ENCODE measurements at regions of chr12 and their contacts with region 1.

Region 1: GRCh38 chr12:48105862-48106680 is at the start of gene SENP1:
- DNase-seq: peak; percentile 85 to 94 (median 93)
- ATAC-seq: peak; percentile 92
- H3K4me3 ChIP-seq: peak within 1 kb of the TSS; percentile 86
- H3K27ac ChIP-seq: peak within 1 kb of the TSS; percentile 96
- H3K4me1 ChIP-seq: peaks cover 3 to 7% of the 10 kb centered on the region in 2 experiments; a peak in 3 of 5 replicates
- H3K27me3 ChIP-seq: no peaks in the 10 kb centered on the region
- CTCF ChIP-seq: 0 out of 6 replicates have a peak, but pooled peaks of 1 of the 3 experiments have one; percentile 21
- EP300 ChIP-seq: peak; percentile 5; the same call in 1 of the 2 replicates
- POLR2A ChIP-seq: peak; percentile 82
- RAD21 ChIP-seq: 0 out of 4 replicates have a peak, but pooled peaks of 1 of the 2 experiments have one; percentile 13
- polyA plus RNA-seq, gene SENP1: 15.5 to 19.3 TPM

Region 2: GRCh38 chr12:48084066-48084465 is 22.0 kb before region 1 on chr12:
- CTCF ChIA-PET with region 1: no interaction called
- POLR2A ChIA-PET with region 1: interaction called, 10 read pairs
- in situ Hi-C with region 1: no loop called
- intact Hi-C with region 1: no loop called
- DNase-seq: peak in 1 of 4 experiments; percentile 9
- ATAC-seq: no peak; the same call in 2 of the 3 replicates
- H3K4me3 ChIP-seq: no peak overlapping the region
- H3K27ac ChIP-seq: no peak overlapping the region
- H3K4me1 ChIP-seq: no peaks in the 10 kb centered on the region
- H3K27me3 ChIP-seq: no peaks in the 10 kb centered on the region
- CTCF ChIP-seq: peak in 1 of 3 experiments; percentile 45; a peak in 3 of 6 replicates
- EP300 ChIP-seq: no peak
- POLR2A ChIP-seq: no peak
- RAD21 ChIP-seq: peak in 1 of 2 experiments; percentile 52; a peak in 3 of 4 replicates

Region 3: GRCh38 chr12:48119078-48119833 is 13.2 kb after region 1 on chr12 and contains the start of gene PFKM:
- CTCF ChIA-PET with region 1: no interaction called
- POLR2A ChIA-PET with region 1: interaction called, 24 read pairs
- in situ Hi-C with region 1: no loop called
- intact Hi-C with region 1: no loop called
- DNase-seq: peak; percentile 94 to 95 (median 95)
- ATAC-seq: peak; percentile 99
- H3K4me3 ChIP-seq: peak within 1 kb of the TSS; percentile 57
- H3K27ac ChIP-seq: peak within 1 kb of the TSS; percentile 42; the same call in 1 of the 3 replicates
- H3K4me1 ChIP-seq: peaks cover 7 to 26% of the 10 kb centered on the region in 2 experiments; a peak in 4 of 5 replicates
- H3K27me3 ChIP-seq: no peaks in the 10 kb centered on the region
- CTCF ChIP-seq: no peak
- EP300 ChIP-seq: 0 out of 2 replicates have a peak, but pooled peaks have one; percentile 24
- POLR2A ChIP-seq: peak; percentile 52
- RAD21 ChIP-seq: no peak
- polyA plus RNA-seq, gene PFKM: 16.5 to 36.8 TPM

Region 4: DNA sequence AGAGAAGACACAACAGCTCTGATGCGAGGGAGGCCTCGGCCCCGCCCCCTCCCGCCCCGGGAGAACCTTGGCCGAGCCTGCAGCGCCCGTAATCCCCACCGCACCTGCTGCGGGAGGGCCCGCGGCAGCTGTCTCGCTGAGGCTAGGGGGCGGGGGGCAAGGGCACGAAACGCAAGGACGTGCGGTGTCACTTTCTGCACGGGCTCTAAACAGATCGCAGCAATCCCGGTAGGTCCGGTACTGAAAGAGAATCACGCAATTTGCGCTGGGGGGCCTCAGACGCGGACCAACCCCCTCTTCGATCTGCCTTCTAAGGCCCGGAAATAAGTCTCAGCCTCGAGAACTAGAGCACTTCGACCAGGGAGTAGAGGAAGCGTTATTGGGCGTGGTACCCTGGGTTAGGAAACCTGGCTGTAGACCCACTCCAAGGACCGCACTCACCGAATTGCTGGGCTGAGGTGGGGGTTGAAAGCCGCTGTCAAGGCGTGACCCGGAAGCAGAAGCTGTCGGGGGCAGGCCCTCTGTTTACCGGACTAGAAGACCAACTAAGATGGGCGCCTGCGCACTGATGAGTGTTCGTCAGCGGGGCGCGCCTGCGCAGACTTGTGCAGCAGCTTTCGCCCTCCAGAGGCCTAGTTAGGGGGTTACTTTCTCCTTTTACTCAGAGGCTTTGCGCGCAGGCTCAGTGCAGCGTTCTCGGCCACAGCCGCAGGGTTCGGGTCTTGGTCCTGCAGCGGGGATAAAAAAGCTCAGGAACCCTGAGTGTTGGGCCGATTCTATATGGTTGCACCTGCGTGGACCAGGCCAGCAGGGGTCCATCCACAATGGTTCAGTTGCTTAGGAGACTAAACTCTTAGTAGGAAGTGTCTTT is 51.2 kb after region 1 on chr12 and contains the start of gene ASB8:
- CTCF ChIA-PET with region 1: no interaction called
- POLR2A ChIA-PET with region 1: interaction called, 5 read pairs
- in situ Hi-C with region 1: no loop called
- intact Hi-C with region 1: loop called (anchors 1 kb)
- DNase-seq: peak; percentile 97 to 99 (median 98)
- ATAC-seq: peak; percentile 95
- H3K4me3 ChIP-seq: peak within 1 kb of the TSS; percentile 72
- H3K27ac ChIP-seq: peak within 1 kb of the TSS; percentile 80
- H3K4me1 ChIP-seq: peaks cover 4 to 15% of the 10 kb centered on the region in 2 experiments
- H3K27me3 ChIP-seq: no peaks in the 10 kb centered on the region
- CTCF ChIP-seq: peak; percentile 63 to 70 (median 68)
- EP300 ChIP-seq: no peak; the same call in 1 of the 2 replicates
- POLR2A ChIP-seq: peak; percentile 73
- RAD21 ChIP-seq: peak; percentile 6 to 24; a peak in 2 of 4 replicates
- polyA plus RNA-seq, gene ASB8: 20.0 to 29.0 TPM

Measured in K562 (cell line).